ENCODE measurements at regions of chr12 and their contacts with region 1.

Region 1: DNA sequence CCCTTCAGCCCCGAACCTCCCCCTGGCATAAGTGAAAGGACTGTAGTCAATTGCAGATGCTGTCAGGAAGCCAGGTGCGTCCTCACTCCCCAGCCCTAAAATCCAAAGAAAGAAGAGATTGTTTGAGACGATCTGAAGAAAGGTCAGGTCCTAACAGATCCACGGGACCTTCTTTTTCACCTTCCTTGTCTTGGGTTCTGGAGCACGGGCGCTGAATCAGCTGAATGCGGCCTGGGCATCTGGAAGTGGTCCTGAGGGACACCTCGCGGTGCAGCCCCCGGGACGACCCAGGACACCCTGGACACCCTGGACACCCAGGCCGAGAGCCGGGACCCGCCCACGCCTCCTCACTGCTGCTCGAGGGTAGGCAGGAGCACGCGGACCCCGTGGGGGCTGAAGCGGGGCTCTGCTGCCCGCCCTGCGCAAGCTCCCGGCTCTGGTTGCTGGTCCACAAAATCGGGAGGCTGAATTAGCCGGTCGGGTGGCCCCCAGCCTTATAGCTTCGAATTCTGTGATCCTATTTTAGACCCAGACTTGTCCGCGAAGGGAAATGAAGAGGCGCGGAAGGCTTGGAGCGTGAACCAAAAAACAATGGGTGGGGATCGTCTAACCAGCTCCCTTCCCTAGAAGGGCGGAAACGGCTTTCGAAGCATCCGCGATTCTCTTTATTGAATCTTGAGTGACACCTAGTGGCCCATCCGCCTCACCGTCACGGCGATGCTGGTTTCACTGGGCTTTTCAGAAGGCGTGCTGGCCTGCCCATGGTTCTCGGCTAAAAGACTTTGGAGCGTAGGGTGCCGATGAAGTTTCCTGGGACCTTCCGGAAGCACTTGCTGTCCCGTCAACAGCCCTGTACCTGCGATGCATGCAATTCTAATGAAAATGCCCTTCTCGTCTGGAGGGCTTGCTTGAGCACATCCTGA is 46.4 kb upstream of the PLXNC1 start:
- DNase-seq: peak; percentile 91
- H3K4me3 Mint-ChIP-seq: peak overlapping the region; percentile 83
- H3K27ac Mint-ChIP-seq: peak overlapping the region; percentile 80
- H3K4me1 Mint-ChIP-seq: peaks cover 43% of the 10 kb centered on the region
- H3K27me3 Mint-ChIP-seq: peaks cover 12% of the 10 kb centered on the region

Region 2: GRCh38 chr12:92987362-92987761 is 1114.6 kb before region 1 on chr12:
- CTCF ChIA-PET with region 1: interaction called, 38 read pairs
- POLR2A ChIA-PET with region 1: no interaction called
- DNase-seq: no peak
- H3K4me3 Mint-ChIP-seq: no peak overlapping the region
- H3K27ac Mint-ChIP-seq: no peak overlapping the region
- H3K4me1 Mint-ChIP-seq: peaks cover 22% of the 10 kb centered on the region
- H3K27me3 Mint-ChIP-seq: peaks cover 11% of the 10 kb centered on the region

Region 3: GRCh38 chr12:93569656-93570551 is 532.1 kb before region 1 on chr12:
- CTCF ChIA-PET with region 1: interaction called, 178 read pairs
- POLR2A ChIA-PET with region 1: interaction called, 36 read pairs
- DNase-seq: peak; percentile 82
- H3K4me3 Mint-ChIP-seq: peak overlapping the region; percentile 83
- H3K27ac Mint-ChIP-seq: peak overlapping the region; percentile 90
- H3K4me1 Mint-ChIP-seq: peaks cover 36% of the 10 kb centered on the region
- H3K27me3 Mint-ChIP-seq: peaks cover 2% of the 10 kb centered on the region

Region 4: GRCh38 chr12:93766796-93767523 is 335.0 kb before region 1 on chr12:
- CTCF ChIA-PET with region 1: interaction called, 237 read pairs
- POLR2A ChIA-PET with region 1: interaction called, 55 read pairs
- DNase-seq: peak; percentile 57
- H3K4me3 Mint-ChIP-seq: peak overlapping the region; percentile 5
- H3K27ac Mint-ChIP-seq: peak overlapping the region; percentile 75
- H3K4me1 Mint-ChIP-seq: peaks cover 42% of the 10 kb centered on the region
- H3K27me3 Mint-ChIP-seq: no peaks in the 10 kb centered on the region

Region 5: GRCh38 chr12:93889516-93890212 is 212.3 kb before region 1 on chr12:
- CTCF ChIA-PET with region 1: interaction called, 12 read pairs
- POLR2A ChIA-PET with region 1: no interaction called
- DNase-seq: no peak
- H3K4me3 Mint-ChIP-seq: no peak overlapping the region
- H3K27ac Mint-ChIP-seq: no peak overlapping the region
- H3K4me1 Mint-ChIP-seq: peaks cover 4% of the 10 kb centered on the region
- H3K27me3 Mint-ChIP-seq: peaks cover 5% of the 10 kb centered on the region

Region 6: DNA sequence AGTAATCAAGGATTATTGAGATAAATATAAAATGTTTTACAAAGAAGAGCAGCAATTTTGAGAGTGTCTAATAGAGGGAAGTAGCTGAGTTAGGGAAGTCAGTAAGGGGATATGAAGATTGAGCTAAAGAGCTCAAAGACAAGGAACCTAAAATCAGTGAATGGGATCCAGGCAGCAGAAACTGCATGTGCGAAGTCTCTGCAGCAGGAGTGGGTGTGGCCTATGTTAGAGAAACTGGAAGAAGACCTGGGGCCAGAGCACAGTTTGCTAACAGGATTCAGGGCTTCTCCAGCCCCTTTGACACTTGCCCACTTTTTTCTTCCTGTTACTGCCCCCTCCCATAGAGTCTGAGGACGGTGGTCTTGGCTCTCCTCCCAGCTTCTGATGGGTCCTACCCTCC is 10.1 kb after region 1 on chr12:
- CTCF ChIA-PET with region 1: interaction called, 30 read pairs
- POLR2A ChIA-PET with region 1: interaction called, 7 read pairs
- DNase-seq: no peak
- H3K4me3 Mint-ChIP-seq: no peak overlapping the region
- H3K27ac Mint-ChIP-seq: no peak overlapping the region
- H3K4me1 Mint-ChIP-seq: peaks cover 12% of the 10 kb centered on the region
- H3K27me3 Mint-ChIP-seq: peaks cover 2% of the 10 kb centered on the region

Measured in activated CD4-positive, alpha-beta memory T cell treated with anti-CD3 and anti-CD28 coated beads, Interleukin-2, amount 10 ng/mL, durations not matched to agents 7 days and 5 days (primary cell).